A673 (cell line): ENCODE measurements at regions of chr20 and their contacts with region 1.

Region 1: DNA sequence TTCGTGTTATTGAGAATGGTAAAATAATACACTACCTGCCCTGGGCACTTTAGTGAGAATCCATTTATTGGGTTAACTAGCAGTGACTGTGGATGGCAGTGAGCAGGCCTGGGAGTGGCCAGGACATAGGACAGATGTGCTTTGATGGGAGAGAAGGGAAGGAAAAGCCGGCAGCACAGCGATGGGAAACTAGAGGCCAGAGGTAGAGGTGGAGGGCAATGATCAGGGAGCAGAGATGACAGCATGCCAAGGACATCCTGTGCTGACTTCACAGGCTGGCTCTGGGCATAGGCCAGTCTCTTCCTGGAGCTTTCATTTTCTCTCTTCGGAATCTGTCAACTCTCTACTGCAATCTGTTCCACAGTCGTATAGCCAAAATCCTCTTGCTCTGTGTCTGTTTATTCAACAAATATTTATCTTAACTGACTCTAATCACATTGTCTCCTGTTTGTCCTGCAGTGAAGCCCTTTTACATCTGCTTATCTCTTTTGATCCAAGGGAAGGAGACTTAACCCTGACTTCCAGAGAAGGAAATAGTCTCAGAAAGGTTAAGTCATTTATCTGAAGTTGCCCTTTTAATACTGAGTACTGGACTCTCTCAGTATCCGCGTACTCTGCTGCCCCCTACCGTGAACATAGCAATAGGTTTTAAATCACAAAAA is 18.4 kb upstream of the MMP24 start:
- DNase-seq: peak; percentile 77
- H3K4me3 ChIP-seq: no peak overlapping the region
- H3K27ac ChIP-seq: no peak overlapping the region
- H3K4me1 ChIP-seq: no peaks in the 10 kb centered on the region
- H3K27me3 ChIP-seq: no peaks in the 10 kb centered on the region
- CTCF ChIP-seq: peak; percentile 78

Region 2: GRCh38 chr20:35063168-35063567 is 144.9 kb before region 1 on chr20:
- CTCF ChIA-PET with region 1: no interaction called
- POLR2A ChIA-PET with region 1: no interaction called
- intact Hi-C with region 1: no loop called
- DNase-seq: no peak
- H3K4me3 ChIP-seq: no peak overlapping the region
- H3K27ac ChIP-seq: no peak overlapping the region
- H3K4me1 ChIP-seq: peaks cover 13% of the 10 kb centered on the region
- H3K27me3 ChIP-seq: no peaks in the 10 kb centered on the region
- CTCF ChIP-seq: no peak

Region 3: DNA sequence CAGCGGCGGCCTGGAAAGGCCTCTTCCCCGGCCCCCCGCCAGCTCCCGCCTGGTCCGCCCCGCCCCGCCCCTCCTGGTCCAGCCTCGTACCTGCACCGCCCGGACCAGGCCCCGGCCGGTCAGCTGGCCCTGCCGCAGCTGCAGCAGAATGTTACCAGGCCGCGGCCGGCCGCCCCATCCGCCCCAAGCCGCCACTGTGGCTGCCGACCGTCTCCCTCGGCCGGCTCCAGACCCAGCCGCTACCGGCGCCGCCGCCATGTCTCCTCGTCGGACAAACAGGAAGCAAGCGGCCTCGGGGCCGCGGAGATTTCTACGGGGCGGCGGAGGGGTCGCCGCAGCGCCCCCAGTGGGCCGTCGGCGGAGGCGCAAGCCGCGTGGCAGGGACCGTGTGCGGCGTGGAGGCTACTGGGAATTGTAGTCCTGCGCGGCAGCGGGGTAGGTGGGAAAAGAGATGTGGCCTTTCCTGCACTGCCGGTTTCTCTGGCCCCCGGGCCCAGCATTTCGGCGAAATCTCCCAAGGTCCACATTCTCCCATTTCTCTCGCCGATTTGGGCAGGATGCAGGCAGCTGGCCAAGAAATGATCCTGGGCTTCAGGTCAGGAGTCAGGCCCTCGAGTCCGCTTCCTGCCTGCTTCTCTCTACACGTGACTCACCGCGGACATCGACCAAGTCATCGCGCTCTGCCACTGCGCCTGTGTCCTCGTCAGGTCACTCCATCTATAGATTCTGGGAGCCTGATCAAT is 115.4 kb before region 1 on chr20 and contains the start of gene TRPC4AP:
- CTCF ChIA-PET with region 1: interaction called, 6 read pairs
- POLR2A ChIA-PET with region 1: no interaction called
- intact Hi-C with region 1: loop called (anchors 2 kb)
- DNase-seq: peak; percentile 94
- H3K4me3 ChIP-seq: peak within 1 kb of the TSS; percentile 94
- H3K27ac ChIP-seq: peak within 1 kb of the TSS; percentile 87
- H3K4me1 ChIP-seq: peaks cover 26% of the 10 kb centered on the region
- H3K27me3 ChIP-seq: no peaks in the 10 kb centered on the region
- CTCF ChIP-seq: peak; percentile 97
- total RNA-seq, gene TRPC4AP: 34.6 and 39.5 TPM in 2 replicates

Region 4: GRCh38 chr20:35151736-35152135 is 56.3 kb before region 1 on chr20:
- CTCF ChIA-PET with region 1: no interaction called
- POLR2A ChIA-PET with region 1: no interaction called
- intact Hi-C with region 1: no loop called
- DNase-seq: no peak
- H3K4me3 ChIP-seq: no peak overlapping the region
- H3K27ac ChIP-seq: no peak overlapping the region
- H3K4me1 ChIP-seq: no peaks in the 10 kb centered on the region
- H3K27me3 ChIP-seq: no peaks in the 10 kb centered on the region
- CTCF ChIP-seq: no peak

Region 5: DNA sequence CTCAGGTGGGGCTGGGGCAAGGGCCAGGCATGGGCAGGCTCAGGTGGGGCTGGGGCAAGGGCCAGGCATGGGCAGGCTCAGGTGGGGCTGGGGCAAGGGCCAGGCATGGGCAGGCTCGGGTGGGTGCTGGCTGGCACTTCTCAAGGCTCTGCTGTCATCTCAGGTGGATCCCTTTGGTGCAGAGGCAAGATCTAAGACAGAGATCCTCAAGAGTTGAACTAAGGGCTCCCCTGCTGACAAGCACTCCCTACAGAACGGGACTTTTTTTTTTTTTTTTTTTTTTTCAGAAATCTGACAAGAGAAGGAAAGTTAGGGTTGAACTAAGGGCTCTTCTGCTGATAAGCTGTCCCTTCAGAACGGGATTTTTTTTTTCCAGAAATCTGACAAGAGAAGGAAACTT is 44.9 kb after region 1 on chr20:
- CTCF ChIA-PET with region 1: no interaction called
- POLR2A ChIA-PET with region 1: interaction called, 18 read pairs
- intact Hi-C with region 1: no loop called
- DNase-seq: no peak
- H3K4me3 ChIP-seq: no peak overlapping the region
- H3K27ac ChIP-seq: no peak overlapping the region
- H3K4me1 ChIP-seq: no peaks in the 10 kb centered on the region
- H3K27me3 ChIP-seq: no peaks in the 10 kb centered on the region
- CTCF ChIP-seq: no peak